Activated CD4-positive, alpha-beta T cell treated with anti-CD3 and anti-CD28 coated beads for 36 hours (primary cell): ENCODE measurements at regions of chr17 and their contacts with region 1.

Region 1: DNA sequence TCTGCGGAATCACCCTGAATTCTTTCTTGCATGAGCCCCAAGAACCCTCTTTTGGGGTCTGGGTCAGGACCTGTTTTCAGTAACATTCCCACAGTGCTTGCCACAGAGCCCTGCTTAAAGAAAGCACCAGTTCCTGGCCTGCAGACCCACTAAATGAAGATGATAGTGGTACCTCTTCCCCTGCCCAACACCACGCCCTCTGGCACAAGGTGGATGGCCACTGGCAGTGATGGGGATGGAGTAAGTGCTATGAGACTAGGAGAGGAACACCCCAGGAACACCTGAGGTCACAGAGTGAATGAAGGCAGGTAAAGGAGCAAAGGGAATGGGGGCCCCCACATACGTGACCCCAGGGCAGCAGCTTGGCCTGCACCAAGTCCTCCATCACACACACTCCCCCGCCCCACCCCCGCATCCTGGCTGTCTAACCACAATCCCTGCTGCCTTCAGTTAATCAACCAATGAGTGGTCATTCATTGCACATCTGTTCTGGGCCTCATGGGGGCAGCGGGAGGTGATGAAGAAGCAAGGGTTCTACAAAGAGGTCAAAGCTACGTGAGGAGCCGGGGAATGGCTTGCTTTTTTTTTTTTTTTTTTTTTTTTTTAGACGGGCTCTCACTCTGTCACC is 3.9 kb upstream of the PPY start:
- DNase-seq: peak; percentile 33
- ATAC-seq: no peak
- H3K4me3 Mint-ChIP-seq: no peak overlapping the region
- H3K27ac Mint-ChIP-seq: no peak overlapping the region
- H3K4me1 Mint-ChIP-seq: peaks cover 6% of the 10 kb centered on the region
- H3K27me3 Mint-ChIP-seq: peaks cover 13% of the 10 kb centered on the region

Region 2: DNA sequence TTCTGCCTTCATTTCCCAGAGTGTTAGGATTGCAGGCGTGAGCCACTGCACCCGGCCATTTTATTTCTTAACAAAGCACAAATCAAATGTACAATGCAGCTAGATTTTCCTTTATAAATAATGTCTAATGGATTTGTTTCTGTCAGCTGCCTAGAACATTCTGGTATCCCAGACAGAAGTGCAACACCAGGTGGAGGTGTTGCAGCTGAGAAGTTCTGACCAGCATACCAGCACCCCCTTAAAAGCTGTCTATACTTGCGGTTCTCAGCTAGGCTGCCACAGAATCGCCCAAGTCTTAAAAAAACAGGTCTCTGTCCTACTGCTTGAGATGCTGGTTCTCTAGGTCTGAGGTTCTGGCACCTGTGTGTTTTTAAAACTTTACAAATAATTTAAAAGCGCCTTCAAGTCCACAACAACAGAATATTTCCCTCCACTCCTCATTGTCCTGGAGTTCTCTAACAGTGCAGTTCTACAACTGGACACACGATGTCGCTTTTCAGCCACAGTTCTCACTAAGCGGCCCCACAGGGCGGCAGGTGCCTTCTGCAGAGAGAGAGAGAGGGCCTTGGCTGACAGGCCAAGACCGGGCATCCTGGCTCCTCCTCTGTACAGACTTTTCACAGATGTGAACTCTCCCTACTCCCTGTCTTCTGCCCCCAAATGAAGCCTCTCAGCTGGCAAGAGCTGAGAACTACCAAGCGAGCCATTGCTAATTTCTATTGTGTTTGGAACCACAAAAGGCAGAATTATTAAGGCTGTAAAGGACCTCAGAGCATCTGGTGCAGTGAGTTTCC is 251.9 kb before region 1 on chr17:
- CTCF ChIA-PET with region 1: no interaction called
- POLR2A ChIA-PET with region 1: no interaction called
- intact Hi-C with region 1: no loop called
- DNase-seq: peak; percentile 86
- ATAC-seq: peak; percentile 99
- H3K4me3 Mint-ChIP-seq: no peak overlapping the region
- H3K27ac Mint-ChIP-seq: no peak overlapping the region
- H3K4me1 Mint-ChIP-seq: no peaks in the 10 kb centered on the region
- H3K27me3 Mint-ChIP-seq: peaks cover 3% of the 10 kb centered on the region

Region 3: GRCh38 chr17:43871951-43872695 is 74.1 kb before region 1 on chr17:
- CTCF ChIA-PET with region 1: no interaction called
- POLR2A ChIA-PET with region 1: no interaction called
- intact Hi-C with region 1: no loop called
- DNase-seq: no peak
- ATAC-seq: no peak
- H3K4me3 Mint-ChIP-seq: no peak overlapping the region
- H3K27ac Mint-ChIP-seq: no peak overlapping the region
- H3K4me1 Mint-ChIP-seq: no peaks in the 10 kb centered on the region
- H3K27me3 Mint-ChIP-seq: peaks cover 12% of the 10 kb centered on the region

Region 4: DNA sequence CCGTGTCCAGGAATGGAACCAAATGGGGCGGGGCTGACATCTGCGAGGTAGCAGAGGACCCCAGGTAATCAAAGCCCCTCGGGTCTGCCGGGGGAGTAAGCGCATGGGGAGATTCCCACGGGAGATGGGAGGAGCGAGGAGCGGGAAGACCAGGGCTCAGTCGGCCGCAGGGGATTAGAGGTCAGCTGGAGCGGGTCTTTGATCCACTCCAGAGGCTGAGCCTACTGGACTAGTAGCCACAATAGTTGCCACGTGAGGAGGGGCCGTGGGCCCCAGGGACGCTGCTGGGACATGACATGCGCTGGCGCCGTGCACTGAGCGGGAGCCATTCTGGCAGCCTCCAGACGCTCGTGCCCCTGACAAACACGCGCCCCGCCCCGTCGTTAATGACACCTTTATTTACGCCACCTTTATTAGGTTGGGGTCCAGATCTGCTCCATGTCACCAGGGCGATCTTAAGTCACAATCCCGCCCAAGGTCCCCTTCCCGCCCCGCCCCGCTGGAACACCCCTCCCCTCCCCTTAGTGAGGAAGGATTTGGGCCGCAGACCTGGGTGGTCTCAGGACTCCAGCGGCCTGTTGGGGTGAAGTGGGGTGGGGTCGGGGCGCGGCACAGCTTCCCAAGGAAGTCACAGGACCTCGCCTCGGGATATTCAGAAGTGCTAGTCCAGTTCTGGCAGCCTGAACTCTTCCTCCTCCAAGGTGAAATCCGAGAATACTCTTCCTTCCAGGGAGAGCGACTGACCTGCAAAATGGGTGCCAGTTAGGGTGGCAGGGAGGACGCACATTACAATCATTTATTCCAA is 18.9 kb before region 1 on chr17:
- CTCF ChIA-PET with region 1: interaction called, 42 read pairs
- POLR2A ChIA-PET with region 1: no interaction called
- intact Hi-C with region 1: no loop called
- DNase-seq: peak; percentile 55
- ATAC-seq: peak; percentile 52
- H3K4me3 Mint-ChIP-seq: peak overlapping the region; percentile 68
- H3K27ac Mint-ChIP-seq: peak overlapping the region; percentile 74
- H3K4me1 Mint-ChIP-seq: peaks cover 21% of the 10 kb centered on the region
- H3K27me3 Mint-ChIP-seq: peaks cover 3% of the 10 kb centered on the region

Region 5: DNA sequence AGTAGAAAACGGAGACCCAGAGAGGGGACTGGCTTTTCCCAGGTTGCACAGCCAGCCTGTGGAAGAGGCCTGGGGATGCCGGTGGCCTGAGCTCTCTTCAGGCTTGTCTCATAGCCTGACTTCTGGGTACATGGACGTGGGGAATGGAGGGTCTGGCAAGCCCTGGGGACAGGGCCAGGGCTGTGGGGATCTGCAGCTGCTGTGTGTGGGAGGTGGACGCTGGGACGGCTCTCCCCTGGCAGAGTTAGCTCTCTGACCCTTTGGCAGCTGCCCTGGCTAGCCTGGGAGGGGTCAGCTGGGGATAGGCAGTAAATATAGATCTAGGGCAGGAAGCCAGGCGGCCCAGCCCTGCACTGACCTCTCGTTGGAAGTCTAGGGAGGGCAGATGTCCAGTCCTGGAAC is 301.3 kb after region 1 on chr17:
- CTCF ChIA-PET with region 1: no interaction called
- POLR2A ChIA-PET with region 1: no interaction called
- intact Hi-C with region 1: no loop called
- DNase-seq: no peak
- ATAC-seq: no peak
- H3K4me3 Mint-ChIP-seq: no peak overlapping the region
- H3K27ac Mint-ChIP-seq: no peak overlapping the region
- H3K4me1 Mint-ChIP-seq: peaks cover 32% of the 10 kb centered on the region
- H3K27me3 Mint-ChIP-seq: no peaks in the 10 kb centered on the region